Activated naive CD4-positive, alpha-beta T cell treated with anti-CD3 and anti-CD28 coated beads for 36 hours (primary cell): ENCODE measurements at regions of chr11 and their contacts with region 1.

Region 1: DNA sequence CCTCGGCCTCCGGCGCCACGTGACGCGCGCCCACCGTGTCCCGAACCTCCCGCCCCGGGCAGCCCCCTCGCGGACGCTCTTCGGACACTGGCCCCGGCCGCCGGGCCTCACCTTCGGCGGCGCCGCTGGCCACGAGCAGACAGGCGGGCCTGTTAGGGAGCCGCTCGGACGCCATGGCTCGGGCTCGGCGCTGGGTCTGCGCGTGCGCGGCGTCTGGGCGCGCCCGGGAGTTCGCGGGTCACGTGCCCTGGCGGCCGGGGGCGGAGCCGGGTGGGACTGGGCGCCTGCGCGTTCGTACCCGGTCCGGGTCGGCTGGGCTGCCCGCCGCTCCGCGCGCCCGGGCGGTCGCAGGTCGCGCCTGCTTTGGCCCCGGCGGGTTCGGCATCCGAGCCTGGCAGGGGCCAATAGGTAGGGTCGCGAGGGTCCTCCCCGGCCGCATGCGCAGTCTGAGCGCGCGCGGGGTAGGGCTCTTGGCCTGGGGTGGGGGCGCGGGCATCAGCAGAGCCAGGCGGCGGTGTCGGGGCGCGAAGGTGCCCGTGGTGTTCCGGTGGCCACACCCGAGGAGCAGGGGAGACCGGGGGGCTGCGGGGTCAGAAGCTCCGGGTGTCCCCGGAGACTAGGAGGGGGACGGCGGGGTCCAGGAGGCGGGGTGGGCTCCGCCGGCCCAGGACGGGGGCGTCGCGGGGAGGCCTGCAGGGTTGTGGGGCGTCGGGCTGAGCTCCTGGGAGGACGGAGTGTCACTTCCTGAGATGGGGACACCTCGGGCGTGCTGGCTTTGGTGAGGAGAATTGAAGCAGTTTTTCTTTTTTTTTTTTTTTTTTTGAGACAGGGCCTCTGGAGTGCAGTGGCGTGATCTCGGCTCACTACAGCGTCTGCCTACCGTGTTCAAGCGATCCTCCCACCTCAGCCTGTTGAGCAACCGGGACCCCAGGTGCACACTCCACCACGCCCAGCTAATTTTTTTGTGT is at the start of gene GATD1:
- DNase-seq: peak; percentile 93
- H3K4me3 Mint-ChIP-seq: peak within 1 kb of the TSS; percentile 87
- H3K27ac Mint-ChIP-seq: peak within 1 kb of the TSS; percentile 74
- H3K4me1 Mint-ChIP-seq: peaks cover 30% of the 10 kb centered on the region
- H3K27me3 Mint-ChIP-seq: no peaks in the 10 kb centered on the region
- total RNA-seq, gene GATD1: 33.0 to 34.3 TPM

Region 2: DNA sequence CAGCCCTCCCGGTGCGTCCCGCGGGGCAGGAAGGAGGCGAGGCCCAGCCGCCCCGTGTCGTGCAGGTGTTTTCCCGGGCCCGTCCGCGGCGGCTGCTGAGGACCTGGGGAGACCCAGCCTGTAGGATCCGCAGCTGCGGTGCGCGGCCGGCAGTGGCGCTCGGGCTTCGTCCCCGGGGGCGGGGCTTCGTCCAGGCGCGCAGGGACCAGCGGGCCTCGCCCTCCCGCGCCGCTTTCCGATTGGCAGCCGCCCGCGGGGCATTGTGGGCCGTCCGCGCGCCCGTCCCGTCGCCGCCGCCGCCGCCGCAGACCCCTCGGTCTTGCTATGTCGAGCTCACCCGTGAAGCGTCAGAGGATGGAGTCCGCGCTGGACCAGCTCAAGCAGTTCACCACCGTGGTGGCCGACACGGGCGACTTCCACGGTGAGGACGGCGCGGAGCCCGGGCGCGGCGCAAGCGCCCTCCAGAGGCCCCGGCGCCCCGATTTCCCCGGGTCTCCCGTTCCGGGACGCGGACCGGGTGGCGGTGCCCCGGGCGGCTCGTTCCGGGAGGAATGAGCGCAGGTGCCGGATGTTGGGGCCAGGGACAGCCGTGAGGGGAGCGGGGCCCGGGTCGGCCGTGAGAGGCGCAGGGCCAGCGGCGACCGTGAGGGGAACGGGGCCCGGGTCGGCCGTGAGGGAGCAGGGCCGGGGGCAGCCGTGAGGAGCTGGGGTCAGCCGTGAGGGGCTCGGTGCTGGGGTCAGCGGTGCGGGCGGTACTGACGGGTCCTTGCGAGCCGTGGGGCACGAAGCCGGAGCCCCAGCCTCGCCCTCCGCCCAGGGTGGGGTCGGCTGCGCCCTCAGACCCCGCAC is 30.2 kb before region 1 on chr11 and contains the start of gene TALDO1:
- CTCF ChIA-PET with region 1: no interaction called
- intact Hi-C with region 1: loop called (anchors 2 kb)
- DNase-seq: peak; percentile 86
- H3K4me3 Mint-ChIP-seq: peak within 1 kb of the TSS; percentile 84
- H3K27ac Mint-ChIP-seq: peak within 1 kb of the TSS; percentile 83
- H3K4me1 Mint-ChIP-seq: peaks cover 21% of the 10 kb centered on the region
- H3K27me3 Mint-ChIP-seq: no peaks in the 10 kb centered on the region
- total RNA-seq, gene TALDO1: 327 to 360 TPM

Region 3: DNA sequence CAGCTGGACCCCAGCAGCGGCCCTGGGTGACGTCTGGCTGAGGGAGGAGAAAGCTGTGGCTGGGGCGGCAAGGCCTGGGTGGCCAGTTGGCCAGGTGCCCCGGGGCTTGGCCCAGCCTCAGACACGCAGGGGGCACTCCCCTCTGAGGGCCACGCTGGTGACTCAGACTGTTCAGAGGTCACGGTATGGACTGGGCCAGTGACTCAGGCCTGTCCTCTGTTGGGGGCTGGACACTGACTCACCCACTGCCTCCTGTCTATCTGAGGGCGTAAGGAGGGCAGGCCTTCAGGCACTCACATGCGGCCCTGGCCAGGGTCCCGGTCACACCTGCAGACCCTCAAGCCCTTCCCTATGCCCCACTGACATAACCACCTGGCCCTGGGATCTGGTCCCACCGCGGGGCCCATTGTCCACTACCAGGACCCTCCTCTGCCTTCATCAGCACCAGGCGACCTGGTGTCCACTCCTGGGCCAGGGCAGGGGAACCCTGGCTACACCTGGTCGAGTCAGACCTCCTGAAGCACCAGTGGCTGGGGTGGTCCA is 376.4 kb after region 1 on chr11:
- CTCF ChIA-PET with region 1: no interaction called
- intact Hi-C with region 1: no loop called
- DNase-seq: no peak
- H3K4me3 Mint-ChIP-seq: no peak overlapping the region
- H3K27ac Mint-ChIP-seq: no peak overlapping the region
- H3K4me1 Mint-ChIP-seq: peaks cover 4% of the 10 kb centered on the region
- H3K27me3 Mint-ChIP-seq: peaks cover 5% of the 10 kb centered on the region